Activated T-helper 2 cell treated with anti-CD3 and anti-CD28 coated beads, Interferon-gamma antibody, Interleukin-2, Interleukin-4, amounts not matched to agents 10 μg/mL and 5 μg/mL and 100 μg/mL, durations not matched to agents 14 hours and 24 hours and 36 hours (primary cell): ENCODE measurements at regions of chr19 and their contacts with region 1.

Region 1: GRCh38 chr19:13794757-13795589 is at the start of gene ZSWIM4:
- DNase-seq: peak; percentile 95
- H3K4me3 Mint-ChIP-seq: peak within 1 kb of the TSS; percentile 97
- H3K27ac Mint-ChIP-seq: peak within 1 kb of the TSS; percentile 89
- H3K4me1 Mint-ChIP-seq: peaks cover 15% of the 10 kb centered on the region
- H3K27me3 Mint-ChIP-seq: no peaks in the 10 kb centered on the region
- total RNA-seq, gene ZSWIM4: 9.8 and 10.6 TPM in 2 replicates

Region 2: GRCh38 chr19:13774217-13775191 is 20.5 kb before region 1 on chr19 and contains the start of gene C19orf53:
- intact Hi-C with region 1: loop called (anchors 1 kb)
- DNase-seq: peak; percentile 87
- H3K4me3 Mint-ChIP-seq: peak within 1 kb of the TSS; percentile 99
- H3K27ac Mint-ChIP-seq: peak within 1 kb of the TSS; percentile 97
- H3K4me1 Mint-ChIP-seq: peaks cover 14% of the 10 kb centered on the region
- H3K27me3 Mint-ChIP-seq: no peaks in the 10 kb centered on the region
- total RNA-seq, gene C19orf53: 131 and 137 TPM in 2 replicates